PC-3 (cell line): ENCODE measurements at regions of chr4 and their contacts with region 1.

Region 1: DNA sequence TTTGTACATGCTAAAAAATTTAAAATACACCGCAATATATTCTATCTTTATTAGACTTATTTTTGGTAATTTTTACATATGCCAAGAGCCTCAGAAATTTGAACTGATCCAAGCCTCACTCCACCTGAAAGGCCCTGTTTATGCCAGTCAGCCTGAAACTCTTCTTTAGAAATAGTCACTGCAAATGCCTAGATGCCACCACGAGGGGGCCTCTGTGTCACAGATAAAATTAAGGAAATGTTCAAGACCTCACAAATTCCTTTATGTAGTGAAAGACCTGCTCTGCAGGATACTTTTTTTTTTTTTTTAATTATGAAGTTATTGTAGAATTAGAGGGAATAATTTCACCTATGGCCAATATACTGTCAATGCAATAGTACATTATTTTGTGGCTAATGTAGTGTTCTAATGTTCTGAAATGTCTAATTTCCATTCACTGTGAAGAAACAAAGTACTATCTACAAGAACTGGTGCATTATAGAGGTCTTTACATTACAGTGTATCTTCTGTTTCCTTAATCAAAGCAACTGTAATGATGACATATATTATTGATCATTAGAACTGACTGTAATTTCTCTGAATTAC is 69.8 kb downstream of the DTHD1 start:
- DNase-seq: peak; percentile 68
- ATAC-seq: peak; percentile 50
- H3K4me3 ChIP-seq: no peak overlapping the region
- H3K27ac ChIP-seq: no peak overlapping the region
- H3K4me1 ChIP-seq: peaks cover 5% of the 10 kb centered on the region; the same call in 1 of the 2 replicates
- H3K27me3 ChIP-seq: no peaks in the 10 kb centered on the region
- CTCF ChIP-seq: peak; percentile 72

Region 2: GRCh38 chr4:36385951-36386571 is 34.9 kb after region 1 on chr4:
- CTCF ChIA-PET with region 1: no interaction called
- POLR2A ChIA-PET with region 1: no interaction called
- intact Hi-C with region 1: no loop called
- DNase-seq: no peak
- ATAC-seq: no peak
- H3K4me3 ChIP-seq: no peak overlapping the region
- H3K27ac ChIP-seq: no peak overlapping the region
- H3K4me1 ChIP-seq: no peaks in the 10 kb centered on the region
- H3K27me3 ChIP-seq: peaks cover 23% of the 10 kb centered on the region; the same call in 1 of the 2 replicates
- CTCF ChIP-seq: no peak

Region 3: DNA sequence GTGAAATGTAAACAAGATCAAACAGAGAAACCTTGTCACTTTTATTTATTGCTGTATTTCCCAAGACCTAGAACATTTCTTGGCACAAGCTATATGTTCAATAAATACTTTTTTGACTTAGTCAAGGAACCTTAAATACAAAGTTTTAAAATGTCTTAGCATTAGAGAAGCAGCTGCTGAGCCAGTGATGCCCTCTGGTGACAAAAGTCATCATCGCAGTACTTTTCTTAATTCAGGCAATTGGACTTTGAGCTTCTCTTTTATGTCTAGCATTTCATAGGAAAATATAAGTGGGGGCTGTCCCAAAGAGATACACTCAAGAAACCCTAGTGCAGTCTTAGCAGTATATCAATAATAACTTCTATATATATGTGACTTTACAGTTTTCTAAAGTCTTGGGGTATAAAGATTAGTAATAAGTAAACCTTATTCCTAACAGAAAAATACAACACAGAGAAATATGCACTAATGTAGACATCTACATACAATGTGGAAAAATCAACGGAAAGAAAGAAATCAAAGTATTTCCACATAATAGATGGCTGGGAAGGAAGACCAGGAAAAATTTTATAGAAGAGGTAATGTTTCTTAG is 48.7 kb after region 1 on chr4:
- CTCF ChIA-PET with region 1: interaction called, 4 read pairs
- POLR2A ChIA-PET with region 1: no interaction called
- intact Hi-C with region 1: loop called (anchors 1 kb)
- DNase-seq: peak; percentile 53
- ATAC-seq: no peak
- H3K4me3 ChIP-seq: no peak overlapping the region
- H3K27ac ChIP-seq: no peak overlapping the region
- H3K4me1 ChIP-seq: no peaks in the 10 kb centered on the region
- H3K27me3 ChIP-seq: peaks cover 15% of the 10 kb centered on the region
- CTCF ChIP-seq: peak; percentile 77

Region 4: DNA sequence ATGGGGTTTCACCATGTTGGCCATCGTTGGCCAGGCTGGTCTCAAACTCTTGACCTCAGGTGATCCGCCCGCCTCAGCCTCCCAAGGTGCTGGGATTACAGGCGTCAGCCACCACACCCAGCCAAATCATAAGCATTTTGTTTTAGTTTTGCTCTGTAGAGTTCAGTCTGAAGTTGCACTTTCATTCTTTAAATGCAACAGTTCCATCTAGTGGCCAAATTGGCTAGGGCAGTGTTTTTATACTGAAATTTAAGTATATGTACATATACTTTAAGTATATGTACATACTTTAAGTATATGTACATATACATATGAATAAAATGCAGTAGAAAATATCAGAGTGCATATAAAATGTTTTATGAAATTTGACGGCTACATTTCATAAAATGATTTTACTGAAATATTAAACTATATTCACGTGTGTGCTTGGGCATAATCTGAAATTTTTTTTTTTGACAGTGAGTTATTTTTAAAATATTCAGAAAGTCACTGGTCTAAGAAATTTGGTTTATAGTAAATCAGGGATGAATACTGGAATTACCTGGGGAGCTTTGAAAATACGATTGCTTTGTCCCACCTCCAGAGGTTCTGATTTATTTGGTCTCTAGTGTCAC is 1038.9 kb after region 1 on chr4:
- CTCF ChIA-PET with region 1: no interaction called
- POLR2A ChIA-PET with region 1: no interaction called
- intact Hi-C with region 1: loop called (anchors 5 kb)
- DNase-seq: peak; percentile 85
- ATAC-seq: peak; percentile 60; the same call in 1 of the 2 replicates
- H3K4me3 ChIP-seq: no peak overlapping the region
- H3K27ac ChIP-seq: no peak overlapping the region
- H3K4me1 ChIP-seq: peaks cover 8% of the 10 kb centered on the region; the same call in 1 of the 2 replicates
- H3K27me3 ChIP-seq: 0 out of 2 replicates have a peak, but pooled peaks cover 6% of the 10 kb centered on the region
- CTCF ChIP-seq: peak; percentile 62